Ascending aorta (tissue), 2 donors: ENCODE measurements at regions of chr7 and their contacts with region 1.

Region 1: GRCh38 chr7:77940647-77941046 is 142.1 kb downstream of the PHTF2 start:
- DNase-seq: no peak
- H3K4me3 ChIP-seq: no peak overlapping the region
- H3K27ac ChIP-seq: no peak overlapping the region
- H3K4me1 ChIP-seq: no peaks in the 10 kb centered on the region
- H3K27me3 ChIP-seq: no peaks in the 10 kb centered on the region
- CTCF ChIP-seq: peak; percentile 26 to 69 (median 50)

Region 2: DNA sequence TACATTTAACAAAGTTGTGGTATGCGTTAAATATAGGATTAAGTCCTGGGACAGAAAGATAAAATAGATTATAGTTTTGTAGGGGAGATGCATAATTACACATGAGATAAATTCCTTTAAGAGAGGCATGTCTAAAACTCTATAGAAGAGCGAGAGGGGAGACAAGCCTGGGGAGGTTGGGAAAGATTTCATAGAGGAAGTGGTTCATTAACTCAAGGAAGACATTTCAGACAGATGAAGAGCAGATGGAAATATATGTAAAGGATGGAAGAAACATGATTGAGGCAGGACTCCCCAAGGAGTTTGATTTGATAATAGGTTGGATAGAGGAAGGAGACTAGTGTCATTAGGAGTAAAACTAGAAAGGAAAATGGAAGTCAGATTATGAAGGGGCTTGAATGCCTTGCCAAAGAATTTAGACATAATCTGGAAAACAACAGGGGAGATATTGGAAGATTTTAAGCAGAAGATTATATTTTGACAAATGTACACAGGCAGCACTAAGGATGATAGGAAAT is 46.0 kb before region 1 on chr7:
- intact Hi-C with region 1: no loop called
- DNase-seq: no peak
- H3K4me3 ChIP-seq: no peak overlapping the region
- H3K27ac ChIP-seq: no peak overlapping the region
- H3K4me1 ChIP-seq: no peaks in the 10 kb centered on the region
- H3K27me3 ChIP-seq: no peaks in the 10 kb centered on the region
- CTCF ChIP-seq: no peak

Region 3: GRCh38 chr7:78039790-78040776 is 99.4 kb after region 1 on chr7:
- intact Hi-C with region 1: loop called (anchors 1 kb)
- DNase-seq: no peak
- H3K4me3 ChIP-seq: no peak overlapping the region
- H3K27ac ChIP-seq: no peak overlapping the region
- H3K4me1 ChIP-seq: no peaks in the 10 kb centered on the region
- H3K27me3 ChIP-seq: no peaks in the 10 kb centered on the region
- CTCF ChIP-seq: peak; percentile 57 to 85 (median 68)

Region 4: GRCh38 chr7:78226059-78226719 is 285.5 kb after region 1 on chr7:
- intact Hi-C with region 1: loop called (anchors 10 kb)
- DNase-seq: peak in 1 of 2 donors; percentile 74
- H3K4me3 ChIP-seq: no peak overlapping the region
- H3K27ac ChIP-seq: peak overlapping the region in 1 of 2 donors; percentile 55
- H3K4me1 ChIP-seq: peaks cover 0 to 12% of the 10 kb centered on the region in 2 donors
- H3K27me3 ChIP-seq: no peaks in the 10 kb centered on the region
- CTCF ChIP-seq: peak in 2 of 3 experiments; percentile 45 to 49

Region 5: DNA sequence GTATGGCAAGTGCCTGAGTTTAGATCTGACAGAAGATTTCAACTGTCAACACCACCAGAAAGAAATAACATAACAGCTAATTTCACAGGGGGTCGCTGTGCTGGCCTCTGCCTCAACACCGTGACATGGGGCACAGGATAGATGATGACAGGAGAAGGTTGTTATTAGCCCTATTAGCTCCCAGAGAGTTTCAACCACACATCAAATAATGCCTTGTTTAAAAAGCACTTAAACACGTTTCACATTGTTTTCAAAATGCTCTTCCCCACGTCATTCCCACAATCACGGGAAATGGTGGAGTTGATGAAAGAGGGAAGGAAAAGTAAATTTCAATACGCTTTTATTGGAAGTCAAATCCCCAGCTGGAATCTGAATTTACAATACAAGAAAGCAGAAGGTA is 1328.1 kb after region 1 on chr7:
- intact Hi-C with region 1: no loop called
- DNase-seq: no peak
- H3K4me3 ChIP-seq: no peak overlapping the region
- H3K27ac ChIP-seq: no peak overlapping the region
- H3K4me1 ChIP-seq: no peaks in the 10 kb centered on the region
- H3K27me3 ChIP-seq: no peaks in the 10 kb centered on the region
- CTCF ChIP-seq: no peak